Naive thymus-derived CD4-positive, alpha-beta T cell (primary cell): ENCODE measurements at regions of chr2 and their contacts with region 1.

Region 1: DNA sequence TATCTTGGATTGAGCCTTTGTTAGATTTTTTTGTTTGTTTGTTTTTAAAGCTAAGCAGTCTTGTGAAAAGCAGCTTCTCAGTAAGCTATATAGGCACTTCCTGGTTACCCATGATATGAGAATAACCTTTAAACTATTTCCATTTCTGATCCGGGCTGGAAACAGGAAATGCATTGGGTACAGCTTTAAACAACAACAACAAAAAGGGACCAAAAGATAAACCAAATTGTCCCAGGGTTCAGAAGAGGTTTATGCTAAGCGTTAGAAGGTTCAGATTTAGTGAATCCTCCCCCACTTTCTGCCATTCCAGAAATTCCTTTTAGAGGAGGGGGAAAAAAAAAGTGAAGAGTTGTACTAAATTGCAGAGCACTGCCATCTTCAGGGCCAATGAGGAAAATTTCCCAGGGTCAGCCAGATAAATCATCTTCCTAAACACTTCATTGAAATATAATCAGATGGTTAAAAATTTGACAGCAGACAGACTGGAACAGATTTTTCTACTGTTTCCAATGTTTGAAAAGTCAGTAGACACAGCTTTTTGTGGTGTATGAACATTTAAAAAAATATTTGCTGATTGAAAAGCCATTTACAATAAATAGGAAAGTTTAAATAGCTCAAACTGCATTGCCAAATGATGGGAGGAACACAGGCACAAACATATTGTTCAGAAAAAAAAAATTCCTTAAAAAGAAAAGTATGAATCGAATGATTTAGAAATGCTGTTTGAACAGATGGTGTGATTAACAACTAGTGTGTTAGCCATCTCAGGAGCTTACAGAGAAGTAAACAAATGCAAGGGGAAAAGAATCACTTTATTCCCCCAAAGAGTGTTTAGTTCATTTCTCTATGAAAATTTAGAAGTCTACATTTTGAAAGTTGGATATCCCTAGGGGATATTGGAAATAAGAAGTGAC is 189.9 kb upstream of the TANK start:
- DNase-seq: peak in 5 of 9 donors; percentile 14 to 38 (median 27)
- ATAC-seq: peak; percentile 36
- H3K4me3 ChIP-seq: no peak overlapping the region
- H3K4me3 Mint-ChIP-seq: peak overlapping the region in 1 of 10 donors; percentile 27
- H3K27ac ChIP-seq: no peak overlapping the region
- H3K27ac Mint-ChIP-seq: no peak overlapping the region
- H3K4me1 ChIP-seq: no peaks in the 10 kb centered on the region
- H3K4me1 Mint-ChIP-seq: peaks cover 0 to 4% (median 0%) of the 10 kb centered on the region in 7 donors
- H3K27me3 ChIP-seq: peaks cover 0 to 3% of the 10 kb centered on the region in 2 donors
- H3K27me3 Mint-ChIP-seq: peaks cover 0 to 26% (median 0%) of the 10 kb centered on the region in 5 donors

Region 2: DNA sequence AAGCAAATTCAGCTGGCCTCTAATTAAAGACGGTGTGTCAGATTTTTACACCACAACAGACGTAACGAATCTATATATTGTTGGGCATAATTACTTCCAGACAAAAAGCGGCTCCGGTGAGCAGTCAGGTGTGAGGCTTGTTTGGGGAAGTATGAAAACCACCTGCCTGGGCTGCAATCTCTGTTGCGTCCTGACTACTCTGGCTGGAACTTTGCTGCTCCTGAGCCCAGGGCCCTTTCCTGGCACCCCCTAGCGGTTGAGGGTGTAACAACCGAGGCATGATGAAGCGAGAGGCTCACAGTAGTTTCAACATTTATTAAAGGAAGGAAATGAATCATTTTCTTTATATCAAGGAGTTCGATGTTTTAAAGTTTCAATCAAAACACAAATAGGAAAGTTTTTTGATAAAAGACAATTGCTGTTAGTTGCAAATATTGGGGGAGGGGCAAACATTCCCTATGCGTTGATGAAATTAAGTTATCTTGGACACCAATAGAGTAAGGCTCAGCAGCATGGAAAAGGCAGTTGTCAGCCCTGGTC is 759.6 kb before region 1 on chr2:
- CTCF ChIA-PET with region 1: no interaction called
- POLR2A ChIA-PET with region 1: no interaction called
- intact Hi-C with region 1: loop called in 1 of 2 experiments (anchors 2 kb)
- DNase-seq: peak; percentile 46 to 79 (median 71)
- ATAC-seq: peak; percentile 90
- H3K4me3 ChIP-seq: no peak overlapping the region
- H3K4me3 Mint-ChIP-seq: no peak overlapping the region
- H3K27ac ChIP-seq: no peak overlapping the region
- H3K27ac Mint-ChIP-seq: peak overlapping the region in 1 of 9 donors; percentile 19
- H3K4me1 ChIP-seq: no peaks in the 10 kb centered on the region
- H3K4me1 Mint-ChIP-seq: peaks cover 0 to 11% (median 8%) of the 10 kb centered on the region in 7 donors
- H3K27me3 ChIP-seq: no peaks in the 10 kb centered on the region
- H3K27me3 Mint-ChIP-seq: peaks cover 0 to 22% (median 5%) of the 10 kb centered on the region in 5 donors

Region 3: DNA sequence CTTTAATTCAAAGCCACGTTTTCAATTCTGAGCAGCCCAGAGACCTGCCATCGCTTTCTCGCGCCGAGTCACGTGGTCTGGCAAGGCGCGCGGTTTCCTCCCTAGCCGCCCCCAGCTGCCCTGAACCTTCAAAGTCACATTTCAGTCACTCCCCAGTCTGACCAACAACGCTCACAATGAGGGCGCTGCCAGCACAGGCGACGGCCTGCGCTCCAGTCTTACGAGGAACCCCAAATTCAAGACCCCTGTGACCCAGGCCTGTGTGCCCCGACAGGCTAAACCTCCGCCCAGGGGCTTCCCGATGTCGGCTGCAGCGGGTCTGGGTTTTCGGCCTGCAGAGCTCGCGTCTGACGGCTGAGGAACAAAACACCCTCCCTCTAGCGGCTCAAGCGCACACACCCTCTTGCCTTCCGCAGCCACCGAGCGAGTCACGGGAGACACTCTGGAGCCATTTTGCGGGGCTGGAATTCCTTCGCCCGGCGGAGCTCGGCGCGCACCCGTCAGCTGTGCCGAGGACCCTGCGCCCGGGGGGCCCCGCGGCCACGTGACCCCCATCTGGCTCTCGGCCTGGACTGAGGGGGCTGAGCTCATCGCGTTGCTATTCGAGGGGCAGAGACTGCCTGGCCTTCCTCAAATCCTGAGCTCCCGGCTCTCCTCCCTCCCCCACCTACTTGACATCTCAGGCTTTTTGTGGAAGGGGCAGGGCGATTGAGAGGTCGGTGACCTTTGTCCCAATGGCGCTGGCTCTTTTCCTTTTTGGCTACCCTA is 700.3 kb before region 1 on chr2:
- CTCF ChIA-PET with region 1: no interaction called
- POLR2A ChIA-PET with region 1: no interaction called
- intact Hi-C with region 1: loop called in 1 of 2 experiments (anchors 5 kb)
- DNase-seq: peak; percentile 43 to 68 (median 63)
- ATAC-seq: peak; percentile 89
- H3K4me3 ChIP-seq: peak overlapping the region; percentile 59
- H3K4me3 Mint-ChIP-seq: peak overlapping the region; percentile 75 to 95 (median 88)
- H3K27ac ChIP-seq: peak overlapping the region; percentile 66
- H3K27ac Mint-ChIP-seq: peak overlapping the region; percentile 42 to 97 (median 89)
- H3K4me1 ChIP-seq: peaks cover 5 to 7% of the 10 kb centered on the region in 2 donors
- H3K4me1 Mint-ChIP-seq: peaks cover 9 to 44% (median 32%) of the 10 kb centered on the region in 7 donors
- H3K27me3 ChIP-seq: no peaks in the 10 kb centered on the region
- H3K27me3 Mint-ChIP-seq: peaks cover 0 to 10% (median 0%) of the 10 kb centered on the region in 5 donors

Region 4: DNA sequence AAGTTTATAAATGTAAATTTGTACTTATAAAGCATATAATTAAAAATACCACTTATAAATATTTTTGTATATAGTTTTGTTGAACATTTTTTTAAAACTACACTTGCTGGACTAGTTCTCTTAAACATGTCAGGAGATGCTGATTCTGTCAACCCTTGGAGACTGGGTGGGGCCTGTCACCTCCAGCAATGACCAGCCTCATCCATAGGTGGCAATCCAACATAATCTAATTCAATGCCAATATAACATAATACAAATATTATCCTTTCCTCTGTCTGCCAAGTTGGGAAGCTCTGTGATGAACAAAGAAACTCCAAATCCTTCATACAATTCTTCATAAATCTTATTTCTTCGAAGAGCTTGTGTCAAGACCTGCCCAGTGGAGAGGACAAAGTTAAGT is 617.1 kb before region 1 on chr2:
- CTCF ChIA-PET with region 1: interaction called, 4 read pairs
- POLR2A ChIA-PET with region 1: no interaction called
- intact Hi-C with region 1: loop called in 1 of 2 experiments (anchors 1 kb)
- DNase-seq: peak in 6 of 9 donors; percentile 14 to 45 (median 24)
- ATAC-seq: peak; percentile 72
- H3K4me3 ChIP-seq: no peak overlapping the region
- H3K4me3 Mint-ChIP-seq: peak overlapping the region in 1 of 10 donors; percentile 36
- H3K27ac ChIP-seq: no peak overlapping the region
- H3K27ac Mint-ChIP-seq: peak overlapping the region in 4 of 9 donors; percentile 51 to 81 (median 66)
- H3K4me1 ChIP-seq: peaks cover 0 to 5% of the 10 kb centered on the region in 2 donors
- H3K4me1 Mint-ChIP-seq: peaks cover 47 to 91% (median 83%) of the 10 kb centered on the region in 7 donors
- H3K27me3 ChIP-seq: no peaks in the 10 kb centered on the region
- H3K27me3 Mint-ChIP-seq: no peaks in the 10 kb centered on the region

Region 5: GRCh38 chr2:160942476-160943142 is 27.7 kb before region 1 on chr2:
- CTCF ChIA-PET with region 1: no interaction called
- POLR2A ChIA-PET with region 1: no interaction called
- intact Hi-C with region 1: no loop called
- DNase-seq: no peak
- ATAC-seq: no peak
- H3K4me3 ChIP-seq: no peak overlapping the region
- H3K4me3 Mint-ChIP-seq: no peak overlapping the region
- H3K27ac ChIP-seq: no peak overlapping the region
- H3K27ac Mint-ChIP-seq: peak overlapping the region in 1 of 9 donors; percentile 3
- H3K4me1 ChIP-seq: peaks cover 0 to 6% of the 10 kb centered on the region in 2 donors
- H3K4me1 Mint-ChIP-seq: peaks cover 6 to 32% (median 27%) of the 10 kb centered on the region in 7 donors
- H3K27me3 ChIP-seq: no peaks in the 10 kb centered on the region
- H3K27me3 Mint-ChIP-seq: peaks cover 0 to 5% (median 0%) of the 10 kb centered on the region in 5 donors

Region 6: GRCh38 chr2:160994141-160995002 is 24.1 kb after region 1 on chr2:
- CTCF ChIA-PET with region 1: interaction called, 14 read pairs
- POLR2A ChIA-PET with region 1: interaction called, 3 read pairs
- intact Hi-C with region 1: no loop called
- DNase-seq: peak; percentile 11 to 86 (median 80)
- ATAC-seq: peak; percentile 95
- H3K4me3 ChIP-seq: no peak overlapping the region
- H3K4me3 Mint-ChIP-seq: peak overlapping the region in 9 of 10 donors; percentile 4 to 76 (median 55)
- H3K27ac ChIP-seq: no peak overlapping the region
- H3K27ac Mint-ChIP-seq: peak overlapping the region in 7 of 9 donors; percentile 0 to 84 (median 26)
- H3K4me1 ChIP-seq: no peaks in the 10 kb centered on the region
- H3K4me1 Mint-ChIP-seq: peaks cover 5 to 13% (median 11%) of the 10 kb centered on the region in 7 donors
- H3K27me3 ChIP-seq: no peaks in the 10 kb centered on the region
- H3K27me3 Mint-ChIP-seq: peaks cover 0 to 13% (median 0%) of the 10 kb centered on the region in 5 donors

Region 7: DNA sequence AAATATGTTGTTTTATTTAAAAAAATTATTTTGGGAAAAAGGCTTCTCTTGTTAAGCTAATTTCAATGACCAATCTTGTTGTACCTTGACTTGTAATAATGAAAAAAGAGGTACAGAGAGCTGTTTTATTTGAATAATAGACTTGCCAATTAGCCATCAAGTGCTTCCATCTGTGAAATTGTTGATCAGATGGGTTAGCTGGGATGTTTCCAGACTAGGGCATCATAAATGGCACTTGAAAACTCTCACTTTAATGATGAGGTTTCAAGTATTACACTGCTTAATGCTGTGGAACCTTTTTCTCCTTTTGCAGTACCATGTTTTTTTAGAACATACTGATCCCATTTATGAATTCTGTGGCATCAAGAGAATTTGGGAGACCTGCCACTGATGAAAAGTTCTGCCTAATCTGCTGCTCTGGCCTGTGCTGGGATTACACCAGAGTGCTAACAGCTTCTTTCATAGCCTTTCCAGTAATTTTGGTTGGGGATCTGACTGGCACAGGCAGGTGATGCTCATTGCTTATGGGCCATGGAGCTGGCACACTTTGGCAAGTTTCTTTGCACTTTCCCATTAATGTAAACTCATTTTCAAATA is 362.2 kb after region 1 on chr2:
- CTCF ChIA-PET with region 1: no interaction called
- POLR2A ChIA-PET with region 1: no interaction called
- intact Hi-C with region 1: no loop called
- DNase-seq: no peak
- ATAC-seq: no peak
- H3K4me3 ChIP-seq: no peak overlapping the region
- H3K4me3 Mint-ChIP-seq: no peak overlapping the region
- H3K27ac ChIP-seq: no peak overlapping the region
- H3K27ac Mint-ChIP-seq: no peak overlapping the region
- H3K4me1 ChIP-seq: no peaks in the 10 kb centered on the region
- H3K4me1 Mint-ChIP-seq: peaks cover 3 to 28% (median 5%) of the 10 kb centered on the region in 7 donors
- H3K27me3 ChIP-seq: no peaks in the 10 kb centered on the region
- H3K27me3 Mint-ChIP-seq: no peaks in the 10 kb centered on the region